Cardiac septum (tissue), 1 donor: ENCODE measurements at regions of chr2 and their contacts with region 1.

Region 1: DNA sequence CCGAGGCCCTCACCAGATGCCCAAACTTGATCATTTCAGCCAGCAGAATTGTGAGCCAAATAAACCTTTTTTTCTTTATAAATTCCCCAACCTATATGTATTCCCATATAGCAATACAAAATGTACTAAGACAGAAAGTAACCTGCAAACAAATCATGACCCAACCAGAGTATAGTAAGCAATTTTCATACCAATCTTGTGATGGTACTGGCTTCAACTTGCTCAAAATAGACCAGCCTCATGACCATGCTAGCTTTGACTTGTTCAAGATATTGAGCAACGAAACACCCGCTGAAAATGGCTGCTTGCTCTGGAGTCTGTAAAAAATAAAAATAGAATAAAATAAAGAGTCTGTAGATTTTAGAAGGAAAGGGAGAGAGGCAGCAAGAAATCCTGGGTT is 97.6 kb downstream of the C1D start:
- DNase-seq: no peak

Region 2: GRCh38 chr2:67982956-67983355 is 17.7 kb after region 1 on chr2:
- intact Hi-C with region 1: loop called (anchors 1 kb)
- DNase-seq: no peak

Region 3: DNA sequence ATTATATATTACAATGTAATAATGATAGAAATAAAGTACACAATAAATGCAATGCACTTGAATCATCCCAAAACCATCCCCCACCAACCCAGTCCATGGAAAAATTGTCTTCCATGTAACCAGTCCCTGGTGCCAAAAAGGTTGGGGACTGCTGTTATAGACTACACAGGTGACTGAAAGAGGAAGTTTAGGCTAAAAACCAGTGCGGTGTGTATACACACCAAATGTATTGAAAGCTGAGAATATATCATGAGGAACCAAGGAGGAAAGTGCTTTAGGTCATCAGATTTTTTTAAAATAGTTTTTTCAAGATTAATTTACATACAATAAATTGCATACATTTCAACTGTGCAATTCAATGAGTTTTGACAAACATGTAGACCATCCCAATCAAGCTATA is 118.1 kb after region 1 on chr2:
- intact Hi-C with region 1: no loop called
- DNase-seq: no peak